CD8-positive, alpha-beta memory T cell (primary cell): ENCODE measurements at regions of chr4 and their contacts with region 1.

Region 1: DNA sequence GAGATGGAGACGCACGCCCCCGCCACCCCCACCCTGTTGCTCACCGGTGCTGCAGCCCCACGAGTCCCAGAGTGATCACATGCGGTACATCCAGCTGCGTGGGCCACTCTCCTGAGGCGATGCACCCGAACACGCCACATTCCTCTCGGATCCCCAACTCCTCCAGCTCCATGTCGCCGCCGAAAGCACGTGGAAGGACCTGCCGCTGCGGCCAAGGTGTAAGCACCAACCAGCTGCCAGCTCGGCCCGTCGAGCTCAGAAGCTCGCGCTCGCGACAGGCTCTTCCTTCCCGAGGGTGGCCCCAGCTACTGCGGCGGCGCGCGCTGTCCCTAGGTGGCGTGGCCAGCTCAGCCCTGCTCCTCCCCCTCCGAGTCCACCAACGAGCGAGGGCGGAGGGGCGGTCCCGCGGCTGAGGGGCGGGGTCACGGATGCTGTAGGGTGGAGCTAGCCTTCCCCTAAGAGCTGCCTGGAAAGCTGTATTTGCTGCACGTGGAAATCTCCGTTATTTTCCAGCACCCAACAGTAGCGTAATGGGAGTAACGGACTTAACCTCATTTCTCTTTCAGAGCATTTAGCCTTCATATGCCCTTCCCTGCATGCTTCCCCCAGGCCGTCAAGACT is at the start of gene PPAT:
- DNase-seq: peak; percentile 98 to 99 (median 99)
- H3K4me3 ChIP-seq: peak within 1 kb of the TSS; percentile 95
- H3K4me3 Mint-ChIP-seq: peak within 1 kb of the TSS; percentile 87 to 96 (median 90)
- H3K27ac ChIP-seq: peak within 1 kb of the TSS; percentile 83
- H3K27ac Mint-ChIP-seq: peak within 1 kb of the TSS; percentile 76 to 99 (median 94)
- H3K4me1 ChIP-seq: peaks cover 22% of the 10 kb centered on the region
- H3K4me1 Mint-ChIP-seq: peaks cover 31 to 55% (median 55%) of the 10 kb centered on the region in 3 donors
- H3K27me3 ChIP-seq: no peaks in the 10 kb centered on the region
- H3K27me3 Mint-ChIP-seq: peaks cover 0 to 3% of the 10 kb centered on the region in 2 donors
- total RNA-seq, gene PPAT: 58.5 to 63.1 TPM

Region 2: GRCh38 chr4:55948726-55949474 is 486.5 kb before region 1 on chr4 and contains the start of gene CEP135:
- CTCF ChIA-PET with region 1: interaction called, 10 read pairs
- POLR2A ChIA-PET with region 1: interaction called, 11 read pairs
- DNase-seq: peak; percentile 88 to 95 (median 91)
- H3K4me3 ChIP-seq: peak within 1 kb of the TSS; percentile 87
- H3K4me3 Mint-ChIP-seq: peak within 1 kb of the TSS; percentile 86 to 97 (median 94)
- H3K27ac ChIP-seq: peak within 1 kb of the TSS; percentile 82
- H3K27ac Mint-ChIP-seq: peak within 1 kb of the TSS; percentile 71 to 98 (median 94)
- H3K4me1 ChIP-seq: peaks cover 29% of the 10 kb centered on the region
- H3K4me1 Mint-ChIP-seq: peaks cover 36 to 53% (median 52%) of the 10 kb centered on the region in 3 donors
- H3K27me3 ChIP-seq: no peaks in the 10 kb centered on the region
- H3K27me3 Mint-ChIP-seq: no peaks in the 10 kb centered on the region
- total RNA-seq, gene CEP135: 15.8 to 16.1 TPM

Region 3: DNA sequence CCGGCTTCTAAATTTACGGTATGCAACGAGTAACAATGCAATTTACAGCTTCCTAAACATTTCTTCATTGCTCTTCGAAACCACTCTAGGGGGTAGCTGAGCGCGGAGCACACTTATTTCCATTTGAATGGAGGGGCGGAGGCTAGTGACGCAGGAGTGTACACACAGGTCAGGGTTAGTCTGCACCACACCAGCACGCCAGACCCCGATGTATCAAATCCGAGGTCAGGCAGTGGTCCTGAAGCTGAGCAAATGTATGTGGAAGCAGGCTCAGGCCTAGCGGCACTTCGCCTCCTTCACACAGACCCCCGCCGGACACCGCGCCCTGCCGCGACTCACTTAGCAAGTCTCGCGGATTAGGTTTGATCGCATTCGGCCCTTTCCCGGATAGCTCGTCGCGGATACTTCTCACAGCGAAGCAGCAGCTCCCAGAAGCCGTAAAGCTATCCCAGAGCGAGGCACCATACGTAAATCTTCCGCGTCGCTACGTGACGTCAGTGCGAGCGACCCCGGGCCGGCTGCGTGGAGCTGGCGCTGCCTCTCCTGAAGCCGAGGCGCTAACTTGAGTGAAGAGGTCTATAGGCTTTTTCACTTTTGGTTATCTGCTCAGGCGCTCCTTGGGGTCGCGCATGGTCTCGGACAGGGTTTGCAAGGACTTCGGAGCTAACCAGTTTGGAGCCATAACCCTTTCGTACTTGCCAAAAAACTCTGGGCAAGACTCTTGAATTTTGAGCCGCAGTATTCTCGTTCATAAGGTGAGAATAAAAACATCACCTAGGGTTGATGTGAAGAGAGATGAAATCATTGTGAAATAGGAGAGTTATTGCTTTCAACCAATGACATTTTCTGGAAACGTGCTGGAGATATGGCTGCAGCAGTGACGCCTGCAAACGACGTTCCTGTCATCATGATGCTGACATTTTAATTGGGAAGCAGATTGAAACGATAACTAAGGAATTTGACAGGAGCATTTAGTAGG is 48.1 kb before region 1 on chr4 and contains the start of gene AASDH:
- CTCF ChIA-PET with region 1: interaction called, 9 read pairs
- POLR2A ChIA-PET with region 1: interaction called, 57 read pairs
- DNase-seq: peak; percentile 88 to 96 (median 94)
- H3K4me3 ChIP-seq: peak within 1 kb of the TSS; percentile 79
- H3K4me3 Mint-ChIP-seq: peak within 1 kb of the TSS; percentile 88 to 99 (median 93)
- H3K27ac ChIP-seq: peak within 1 kb of the TSS; percentile 97
- H3K27ac Mint-ChIP-seq: peak within 1 kb of the TSS; percentile 97 to 99 (median 98)
- H3K4me1 ChIP-seq: peaks cover 24% of the 10 kb centered on the region
- H3K4me1 Mint-ChIP-seq: peaks cover 39 to 50% (median 43%) of the 10 kb centered on the region in 3 donors
- H3K27me3 ChIP-seq: no peaks in the 10 kb centered on the region
- H3K27me3 Mint-ChIP-seq: no peaks in the 10 kb centered on the region
- total RNA-seq, gene AASDH: 8.5 to 13.0 TPM

Region 4: DNA sequence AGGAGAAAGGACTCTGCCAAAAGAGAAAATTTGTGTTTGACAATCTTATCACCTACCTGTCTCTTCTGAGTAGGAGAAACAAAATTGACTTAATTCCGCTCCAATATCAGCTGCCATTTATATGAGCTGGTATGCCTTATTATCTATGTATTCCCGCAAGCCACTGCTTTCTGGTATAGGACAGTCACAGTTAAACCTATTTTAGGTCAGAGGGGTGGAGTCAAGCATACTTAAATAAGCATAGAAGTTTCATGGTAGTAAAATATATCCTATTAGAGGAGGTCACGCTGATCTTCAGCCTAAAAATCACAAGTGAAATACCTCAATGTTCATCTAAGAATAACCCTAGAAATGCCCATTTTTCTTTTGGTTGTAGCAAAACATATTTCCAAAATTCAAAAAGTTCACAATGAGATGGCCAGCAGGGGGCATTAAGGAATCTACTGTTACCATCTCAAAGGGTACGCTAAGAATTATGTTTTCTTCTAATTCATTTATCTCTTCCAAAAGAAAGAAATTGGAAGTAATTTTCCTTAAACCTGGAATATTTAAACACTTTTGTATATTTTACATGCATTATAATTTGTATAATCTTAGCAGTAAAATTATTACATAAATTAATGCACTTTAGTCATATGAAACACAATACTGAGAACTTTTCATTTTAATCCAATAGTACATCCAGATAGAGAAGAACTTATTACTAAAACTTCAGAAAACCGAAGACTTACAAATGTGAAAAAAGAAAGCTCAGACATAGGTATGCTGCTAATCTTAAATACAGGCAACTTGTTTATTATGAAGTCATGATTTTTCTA is 10.5 kb before region 1 on chr4:
- CTCF ChIA-PET with region 1: interaction called, 31 read pairs
- POLR2A ChIA-PET with region 1: interaction called, 6 read pairs
- DNase-seq: peak in 3 of 5 donors; percentile 28 to 47 (median 34)
- H3K4me3 ChIP-seq: no peak overlapping the region
- H3K4me3 Mint-ChIP-seq: no peak overlapping the region
- H3K27ac ChIP-seq: no peak overlapping the region
- H3K27ac Mint-ChIP-seq: no peak overlapping the region
- H3K4me1 ChIP-seq: no peaks in the 10 kb centered on the region
- H3K4me1 Mint-ChIP-seq: peaks cover 2 to 21% (median 3%) of the 10 kb centered on the region in 3 donors
- H3K27me3 ChIP-seq: no peaks in the 10 kb centered on the region
- H3K27me3 Mint-ChIP-seq: no peaks in the 10 kb centered on the region

Region 5: GRCh38 chr4:56467284-56468096 is 32.1 kb after region 1 on chr4 and contains the start of gene SRP72:
- CTCF ChIA-PET with region 1: interaction called, 20 read pairs
- POLR2A ChIA-PET with region 1: interaction called, 46 read pairs
- DNase-seq: peak; percentile 87 to 94 (median 88)
- H3K4me3 ChIP-seq: peak within 1 kb of the TSS; percentile 97
- H3K4me3 Mint-ChIP-seq: peak within 1 kb of the TSS; percentile 93 to 100 (median 98)
- H3K27ac ChIP-seq: peak within 1 kb of the TSS; percentile 96
- H3K27ac Mint-ChIP-seq: peak within 1 kb of the TSS; percentile 92 to 100 (median 98)
- H3K4me1 ChIP-seq: peaks cover 48% of the 10 kb centered on the region
- H3K4me1 Mint-ChIP-seq: peaks cover 56 to 74% (median 63%) of the 10 kb centered on the region in 3 donors
- H3K27me3 ChIP-seq: no peaks in the 10 kb centered on the region
- H3K27me3 Mint-ChIP-seq: no peaks in the 10 kb centered on the region
- total RNA-seq, gene SRP72: 190 to 197 TPM

Region 6: GRCh38 chr4:56698329-56698728 is 262.9 kb after region 1 on chr4:
- CTCF ChIA-PET with region 1: no interaction called
- POLR2A ChIA-PET with region 1: no interaction called
- DNase-seq: no peak
- H3K4me3 ChIP-seq: no peak overlapping the region
- H3K4me3 Mint-ChIP-seq: no peak overlapping the region
- H3K27ac ChIP-seq: no peak overlapping the region
- H3K27ac Mint-ChIP-seq: no peak overlapping the region
- H3K4me1 ChIP-seq: no peaks in the 10 kb centered on the region
- H3K4me1 Mint-ChIP-seq: peaks cover 0 to 9% (median 5%) of the 10 kb centered on the region in 3 donors
- H3K27me3 ChIP-seq: no peaks in the 10 kb centered on the region
- H3K27me3 Mint-ChIP-seq: peaks cover 2 to 4% of the 10 kb centered on the region in 2 donors

Region 7: DNA sequence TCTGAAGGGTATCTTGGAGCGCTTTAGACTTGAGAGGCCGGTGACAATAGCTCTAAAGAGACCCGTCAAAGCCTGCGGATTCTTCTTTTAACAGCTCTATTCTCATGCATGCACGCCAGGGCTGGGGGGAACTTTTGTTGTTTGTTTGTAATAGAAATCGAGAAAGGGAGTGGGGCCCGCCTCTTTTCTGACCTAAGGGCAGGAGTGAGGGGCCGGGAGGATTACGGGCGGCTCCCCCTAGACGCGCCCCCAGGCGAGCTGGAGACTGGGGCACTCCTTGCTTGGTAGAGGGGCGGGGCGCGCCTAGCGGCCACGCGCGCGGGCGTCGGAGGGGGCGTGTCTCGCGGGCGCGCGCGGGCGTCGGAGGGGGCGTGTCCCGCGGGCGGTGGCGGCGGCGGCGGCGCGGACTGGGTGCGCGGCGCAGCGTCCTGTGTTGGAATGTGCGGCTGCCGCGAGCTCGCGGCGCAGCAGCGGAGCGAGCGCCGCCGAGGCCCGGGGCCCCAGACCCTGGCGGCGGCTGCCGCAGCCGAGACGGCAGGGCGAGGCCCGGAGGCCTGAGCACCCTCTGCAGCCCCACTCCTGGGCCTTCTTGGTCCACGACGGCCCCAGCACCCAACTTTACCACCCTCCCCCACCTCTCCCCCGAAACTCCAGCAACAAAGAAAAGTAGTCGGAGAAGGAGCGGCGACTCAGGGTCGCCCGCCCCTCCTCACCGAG is 472.2 kb after region 1 on chr4 and contains the start of gene REST:
- CTCF ChIA-PET with region 1: interaction called, 7 read pairs
- POLR2A ChIA-PET with region 1: interaction called, 31 read pairs
- DNase-seq: peak; percentile 74 to 88 (median 83)
- H3K4me3 ChIP-seq: peak within 1 kb of the TSS; percentile 77
- H3K4me3 Mint-ChIP-seq: peak within 1 kb of the TSS; percentile 89 to 96 (median 93)
- H3K27ac ChIP-seq: peak within 1 kb of the TSS; percentile 81
- H3K27ac Mint-ChIP-seq: peak within 1 kb of the TSS; percentile 79 to 95 (median 94)
- H3K4me1 ChIP-seq: peaks cover 40% of the 10 kb centered on the region
- H3K4me1 Mint-ChIP-seq: peaks cover 41 to 49% (median 46%) of the 10 kb centered on the region in 3 donors
- H3K27me3 ChIP-seq: no peaks in the 10 kb centered on the region
- H3K27me3 Mint-ChIP-seq: peaks cover 0 to 5% of the 10 kb centered on the region in 2 donors
- total RNA-seq, gene REST: 45.2 to 46.6 TPM

Region 8: GRCh38 chr4:56977321-56978012 is 542.1 kb after region 1 on chr4 and contains the start of gene NOA1:
- CTCF ChIA-PET with region 1: interaction called, 7 read pairs
- POLR2A ChIA-PET with region 1: interaction called, 37 read pairs
- DNase-seq: peak; percentile 93 to 99 (median 99)
- H3K4me3 ChIP-seq: peak within 1 kb of the TSS; percentile 89
- H3K4me3 Mint-ChIP-seq: peak within 1 kb of the TSS; percentile 96 to 100 (median 98)
- H3K27ac ChIP-seq: peak within 1 kb of the TSS; percentile 90
- H3K27ac Mint-ChIP-seq: peak within 1 kb of the TSS; percentile 96 to 100 (median 98)
- H3K4me1 ChIP-seq: peaks cover 53% of the 10 kb centered on the region
- H3K4me1 Mint-ChIP-seq: peaks cover 55 to 82% (median 58%) of the 10 kb centered on the region in 3 donors
- H3K27me3 ChIP-seq: no peaks in the 10 kb centered on the region
- H3K27me3 Mint-ChIP-seq: no peaks in the 10 kb centered on the region
- total RNA-seq, gene NOA1: 22.0 TPM